Activated CD8-positive, alpha-beta T cell treated with anti-CD3 and anti-CD28 coated beads, Interleukin-2, amount 10 ng/mL, durations not matched to agents 7 days and 5 days (primary cell): ENCODE measurements at regions of chr19 and their contacts with region 1.

Region 1: GRCh38 chr19:10478903-10479384 is 24.2 kb downstream of the KEAP1 start:
- DNase-seq: peak; percentile 93
- ATAC-seq: peak; percentile 97
- H3K4me3 Mint-ChIP-seq: peak overlapping the region; percentile 55
- H3K27ac Mint-ChIP-seq: peak overlapping the region; percentile 57
- H3K4me1 Mint-ChIP-seq: peaks cover 30% of the 10 kb centered on the region
- H3K27me3 Mint-ChIP-seq: no peaks in the 10 kb centered on the region

Region 2: GRCh38 chr19:10439588-10439987 is 39.4 kb before region 1 on chr19:
- CTCF ChIA-PET with region 1: no interaction called
- POLR2A ChIA-PET with region 1: no interaction called
- DNase-seq: no peak
- ATAC-seq: no peak
- H3K4me3 Mint-ChIP-seq: no peak overlapping the region
- H3K27ac Mint-ChIP-seq: no peak overlapping the region
- H3K4me1 Mint-ChIP-seq: peaks cover 21% of the 10 kb centered on the region
- H3K27me3 Mint-ChIP-seq: no peaks in the 10 kb centered on the region

Region 3: DNA sequence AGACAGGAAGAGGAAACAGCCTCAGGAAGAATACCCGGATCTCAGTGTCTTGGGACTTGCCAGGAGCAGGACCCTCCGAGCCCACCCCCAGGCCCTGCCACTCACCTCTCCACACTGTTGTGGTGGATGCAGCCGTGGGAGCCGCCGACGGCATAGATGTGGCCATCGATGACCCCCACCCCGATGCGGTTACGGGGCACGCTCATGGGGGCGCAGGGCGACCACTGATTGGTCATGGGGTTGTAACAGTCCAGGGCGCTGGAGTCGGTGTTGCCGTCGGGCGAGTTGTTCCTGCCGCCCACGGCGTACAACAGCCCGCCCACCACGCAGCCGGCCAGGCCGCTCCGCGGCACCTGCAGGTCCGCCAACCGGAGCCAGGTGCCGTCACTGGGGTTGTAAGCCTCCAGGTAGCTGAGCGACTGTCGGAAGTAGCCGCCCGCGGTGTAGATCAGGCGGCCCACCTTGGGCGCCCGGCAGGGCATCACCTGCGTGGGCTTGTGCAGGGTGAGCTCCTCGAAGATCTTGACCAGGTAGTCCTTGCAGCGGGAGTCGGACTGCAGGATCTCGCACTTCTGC is 12.6 kb after region 1 on chr19:
- CTCF ChIA-PET with region 1: interaction called, 11 read pairs
- POLR2A ChIA-PET with region 1: no interaction called
- DNase-seq: no peak
- ATAC-seq: no peak
- H3K4me3 Mint-ChIP-seq: no peak overlapping the region
- H3K27ac Mint-ChIP-seq: no peak overlapping the region
- H3K4me1 Mint-ChIP-seq: peaks cover 3% of the 10 kb centered on the region
- H3K27me3 Mint-ChIP-seq: no peaks in the 10 kb centered on the region

Region 4: GRCh38 chr19:10505583-10506229 is 26.8 kb after region 1 on chr19:
- CTCF ChIA-PET with region 1: interaction called, 12 read pairs
- POLR2A ChIA-PET with region 1: no interaction called
- DNase-seq: peak; percentile 89
- ATAC-seq: peak; percentile 18
- H3K4me3 Mint-ChIP-seq: peak overlapping the region; percentile 28
- H3K27ac Mint-ChIP-seq: no peak overlapping the region
- H3K4me1 Mint-ChIP-seq: peaks cover 36% of the 10 kb centered on the region
- H3K27me3 Mint-ChIP-seq: no peaks in the 10 kb centered on the region

Region 5: GRCh38 chr19:10551698-10552301 is 72.9 kb after region 1 on chr19:
- CTCF ChIA-PET with region 1: interaction called, 11 read pairs
- POLR2A ChIA-PET with region 1: no interaction called
- DNase-seq: peak; percentile 62
- ATAC-seq: no peak
- H3K4me3 Mint-ChIP-seq: peak overlapping the region; percentile 25
- H3K27ac Mint-ChIP-seq: peak overlapping the region; percentile 93
- H3K4me1 Mint-ChIP-seq: peaks cover 62% of the 10 kb centered on the region
- H3K27me3 Mint-ChIP-seq: no peaks in the 10 kb centered on the region

Region 6: DNA sequence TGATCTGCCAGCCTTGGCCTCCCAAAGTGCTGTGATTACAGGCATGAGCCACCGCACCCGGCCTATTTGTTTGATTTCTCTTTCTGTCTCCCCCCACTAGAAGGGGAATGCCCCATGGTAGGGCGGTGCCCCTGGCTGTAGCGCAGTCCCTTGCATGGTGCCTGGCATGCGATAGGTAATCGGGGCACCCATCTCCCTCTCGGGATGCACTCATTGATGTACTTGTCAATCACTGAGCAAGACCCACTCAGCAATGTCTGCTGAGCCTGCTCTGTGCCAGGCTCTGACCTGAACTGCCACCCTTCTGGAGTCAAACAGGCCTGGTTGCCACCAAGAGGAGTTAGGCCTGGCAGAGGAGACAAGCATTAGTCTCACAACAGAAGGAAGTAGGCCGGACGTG is 258.8 kb after region 1 on chr19:
- CTCF ChIA-PET with region 1: no interaction called
- POLR2A ChIA-PET with region 1: no interaction called
- DNase-seq: no peak
- ATAC-seq: no peak
- H3K4me3 Mint-ChIP-seq: no peak overlapping the region
- H3K27ac Mint-ChIP-seq: no peak overlapping the region
- H3K4me1 Mint-ChIP-seq: peaks cover 41% of the 10 kb centered on the region
- H3K27me3 Mint-ChIP-seq: no peaks in the 10 kb centered on the region